Adrenal gland (tissue), 19 donors: ENCODE measurements at regions of chr16 and their contacts with region 1.

Region 1: GRCh38 chr16:23182460-23183309 is at the start of gene SCNN1G:
- DNase-seq: peak; percentile 50 to 83 (median 67)
- H3K4me3 ChIP-seq: peak within 1 kb of the TSS in 2 of 4 donors; percentile 1 to 53
- H3K27ac ChIP-seq: no peak within 1 kb of the TSS
- H3K4me1 ChIP-seq: peaks cover 5 to 13% of the 10 kb centered on the region in 2 donors
- H3K27me3 ChIP-seq: peaks cover 38% of the 10 kb centered on the region
- CTCF ChIP-seq: peak; percentile 48 to 97 (median 82)
- POLR2A ChIP-seq: no peak
- total RNA-seq, gene SCNN1G: 0.11 TPM in 1 of 9 donors, not detected in the others

Region 2: DNA sequence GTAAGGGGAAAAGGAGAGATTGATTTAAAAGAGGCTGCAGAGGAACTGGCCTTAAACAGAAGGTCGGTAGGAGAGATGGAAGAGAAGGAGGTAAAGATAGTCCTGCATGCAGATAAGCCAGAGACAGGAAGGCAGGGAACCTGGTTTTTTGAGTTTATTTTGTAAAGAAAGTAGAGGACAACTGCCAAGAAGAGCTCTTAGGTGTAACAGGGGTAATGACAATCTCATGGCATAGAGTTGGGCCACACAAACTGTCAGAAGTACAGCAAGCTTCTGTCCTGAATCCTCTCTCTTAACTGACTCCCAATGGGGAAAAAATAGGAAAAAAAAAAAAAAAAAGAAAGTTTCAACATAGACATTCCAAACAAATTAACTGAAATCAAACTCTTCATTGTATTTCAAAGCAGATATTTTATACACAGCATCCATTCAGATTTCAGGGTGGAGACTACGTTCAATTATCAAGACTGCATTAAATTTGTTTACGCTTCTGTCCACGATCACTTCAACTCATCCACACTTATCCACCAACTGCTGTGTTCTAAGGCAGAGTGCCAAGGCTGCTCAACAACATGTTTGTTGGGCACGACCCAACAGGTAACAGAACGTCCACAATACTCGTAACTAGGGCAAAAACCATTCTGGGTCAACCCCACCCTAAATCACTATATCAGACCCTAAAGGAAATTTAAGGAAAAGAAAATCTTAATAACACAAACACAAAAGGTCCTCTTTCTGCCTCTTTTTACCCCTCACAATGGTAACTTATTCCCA is 68.4 kb before region 1 on chr16:
- intact Hi-C with region 1: no loop called
- DNase-seq: no peak
- H3K4me3 ChIP-seq: no peak overlapping the region
- H3K27ac ChIP-seq: no peak overlapping the region
- H3K4me1 ChIP-seq: peaks cover 4 to 15% of the 10 kb centered on the region in 2 donors
- H3K27me3 ChIP-seq: no peaks in the 10 kb centered on the region
- CTCF ChIP-seq: no peak
- POLR2A ChIP-seq: no peak

Region 3: DNA sequence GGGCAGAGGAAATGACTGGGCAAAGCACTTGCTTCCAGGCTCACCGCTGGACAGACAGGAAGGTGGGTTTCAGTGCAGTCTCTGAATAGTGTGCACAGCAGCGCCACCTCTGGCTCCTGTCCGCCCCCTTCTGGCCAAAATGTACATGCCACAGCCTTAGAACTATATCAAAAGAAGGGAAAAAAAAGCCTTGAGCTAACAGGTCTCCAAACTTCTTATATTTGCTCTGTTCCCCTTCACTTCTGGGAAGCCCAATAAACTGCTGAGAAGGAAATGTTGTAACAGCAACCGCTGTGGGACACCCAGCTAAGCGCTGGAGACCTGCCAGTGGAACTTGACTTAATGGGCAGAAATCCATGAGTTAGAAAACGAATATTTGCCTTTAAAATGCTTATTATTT is 252.8 kb after region 1 on chr16:
- intact Hi-C with region 1: loop called (anchors 5 kb)
- DNase-seq: peak; percentile 43 to 77 (median 58)
- H3K4me3 ChIP-seq: no peak overlapping the region
- H3K27ac ChIP-seq: no peak overlapping the region
- H3K4me1 ChIP-seq: no peaks in the 10 kb centered on the region
- H3K27me3 ChIP-seq: no peaks in the 10 kb centered on the region
- CTCF ChIP-seq: peak; percentile 62 to 78 (median 69)
- POLR2A ChIP-seq: no peak